GM13976 (cell line): ENCODE measurements at regions of chr12 and their contacts with region 1.

Region 1: GRCh38 chr12:11581179-11581755 is 68.2 kb upstream of the ETV6 start:
- DNase-seq: peak; percentile 43
- CTCF ChIP-seq: peak; percentile 20

Region 2: GRCh38 chr12:12032851-12033588 is 451.8 kb after region 1 on chr12:
- in situ Hi-C with region 1: loop called (anchors 10 kb)
- DNase-seq: peak; percentile 50
- CTCF ChIP-seq: peak; percentile 66

Region 3: GRCh38 chr12:12724661-12725545 is 1143.6 kb after region 1 on chr12:
- in situ Hi-C with region 1: loop called (anchors 25 kb)
- DNase-seq: no peak
- CTCF ChIP-seq: no peak